Left cardiac atrium (tissue), 4 donors: ENCODE measurements at regions of chr17 and their contacts with region 1.

Region 1: GRCh38 chr17:81537343-81537855 is 9.2 kb downstream of the FSCN2 start:
- DNase-seq: no peak
- ATAC-seq: peak; percentile 34 to 53

Region 2: GRCh38 chr17:81253358-81254131 is 283.9 kb before region 1 on chr17:
- intact Hi-C with region 1: loop called in 1 of 2 experiments (anchors 1 kb)
- DNase-seq: no peak
- ATAC-seq: peak; percentile 20 to 22

Region 3: DNA sequence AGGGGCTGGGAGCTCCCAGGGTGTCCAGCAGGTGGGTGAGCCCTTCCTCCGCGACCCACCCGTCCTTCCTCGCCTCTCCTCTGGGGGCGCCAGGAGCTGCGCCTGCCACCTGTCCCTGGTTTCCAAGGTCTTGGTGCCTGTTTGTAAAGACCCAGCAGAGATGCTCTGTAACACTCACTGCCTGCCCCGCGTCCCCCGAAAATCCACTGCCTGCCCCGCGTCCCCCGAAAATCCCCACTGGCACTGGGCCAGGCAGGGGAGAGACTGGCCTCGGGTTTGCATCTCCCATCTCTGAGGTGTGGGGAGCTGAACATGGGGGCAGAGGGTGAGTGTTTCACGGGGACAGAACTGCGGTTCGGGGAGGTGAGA is 96.5 kb before region 1 on chr17:
- intact Hi-C with region 1: no loop called
- DNase-seq: no peak
- ATAC-seq: no peak